Activated CD8-positive, alpha-beta T cell treated with anti-CD3 and anti-CD28 coated beads, Interleukin-2, amount 10 ng/mL, durations not matched to agents 7 days and 5 days (primary cell): ENCODE measurements at regions of chr1 and their contacts with region 1.

Region 1: DNA sequence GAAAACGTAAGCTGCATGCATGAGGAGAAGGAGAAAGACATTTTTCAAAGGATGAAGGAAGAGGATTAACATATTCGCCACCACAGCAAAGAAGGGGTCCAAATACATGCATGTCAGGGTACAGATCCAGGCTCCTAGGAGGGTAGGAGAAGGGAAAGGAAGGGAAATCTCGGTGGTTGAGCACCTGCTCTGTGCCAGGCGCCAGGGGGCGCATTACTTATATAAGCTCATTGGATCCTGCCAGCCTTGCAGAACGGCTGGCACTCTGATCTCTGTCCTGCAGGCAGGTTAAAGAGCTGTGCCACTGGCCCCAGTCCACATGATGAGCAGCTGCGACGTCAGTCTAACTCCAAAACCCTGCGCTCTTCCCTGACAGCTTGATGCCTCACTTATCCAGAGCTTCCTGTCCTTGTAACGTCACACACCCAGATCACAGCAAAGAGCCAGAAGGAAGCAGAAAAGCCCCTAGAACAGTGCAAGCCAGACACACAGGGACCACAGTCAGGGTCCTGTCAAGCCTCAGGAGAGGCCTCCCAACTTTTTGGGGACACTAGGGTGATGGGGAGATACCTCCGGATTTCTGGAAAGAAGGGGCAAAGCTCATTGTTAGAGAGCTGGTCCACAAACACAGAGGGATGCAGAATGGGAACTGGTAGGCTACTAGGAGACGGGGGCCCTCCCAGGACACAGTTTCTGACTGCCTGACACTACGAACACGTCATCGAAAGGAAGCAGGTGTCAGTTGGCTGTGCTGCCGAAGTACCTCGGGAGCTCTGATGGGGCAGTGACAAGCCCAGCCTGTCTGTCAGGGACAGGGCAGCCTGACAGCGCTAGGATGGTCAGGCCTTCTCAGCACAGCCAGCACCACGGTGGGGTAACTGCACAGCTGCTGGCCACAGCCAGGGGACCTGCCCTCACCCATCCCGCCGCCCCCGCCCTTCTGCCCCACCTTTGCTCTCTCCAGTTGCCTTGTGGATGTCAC is 99.1 kb downstream of the BEND5 start:
- DNase-seq: peak; percentile 32
- ATAC-seq: peak; percentile 57
- H3K4me3 Mint-ChIP-seq: no peak overlapping the region
- H3K27ac Mint-ChIP-seq: no peak overlapping the region
- H3K4me1 Mint-ChIP-seq: no peaks in the 10 kb centered on the region
- H3K27me3 Mint-ChIP-seq: peaks cover 6% of the 10 kb centered on the region

Region 2: DNA sequence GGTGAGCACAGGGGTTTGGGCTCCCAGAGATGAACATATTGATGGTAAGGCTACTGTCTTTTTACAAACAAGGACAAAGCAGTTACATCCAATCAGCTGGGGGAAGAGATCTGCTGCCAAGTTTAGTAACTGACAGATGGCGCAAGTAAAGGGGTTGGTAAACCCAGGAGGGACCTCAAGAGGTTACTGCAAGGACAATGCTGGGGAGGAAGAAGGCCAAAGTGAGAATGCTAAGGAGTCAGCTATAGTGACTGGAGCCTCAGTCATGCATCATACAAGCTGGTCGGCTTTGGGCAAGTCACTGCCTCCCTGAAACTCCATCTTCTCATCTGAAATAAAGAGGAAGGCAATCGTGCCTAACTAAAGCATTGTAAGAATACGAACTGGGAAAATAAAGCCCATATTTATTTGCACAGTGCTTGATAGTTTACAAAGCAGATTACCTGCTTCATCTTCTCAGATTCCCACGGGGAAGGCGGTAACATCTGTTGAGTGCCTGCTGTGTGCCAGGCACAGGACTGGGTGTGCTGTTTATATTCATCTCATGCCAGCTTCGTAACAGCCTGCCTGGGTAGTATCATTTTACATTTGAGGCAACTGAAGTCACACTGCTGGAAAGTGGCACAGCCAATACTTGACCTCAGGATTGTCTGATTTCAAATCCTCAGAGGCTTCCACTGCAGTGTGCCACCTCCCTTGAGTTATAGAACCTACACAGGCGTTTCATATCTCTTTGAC is 15.7 kb before region 1 on chr1:
- CTCF ChIA-PET with region 1: interaction called, 10 read pairs
- POLR2A ChIA-PET with region 1: no interaction called
- DNase-seq: no peak
- ATAC-seq: no peak
- H3K4me3 Mint-ChIP-seq: no peak overlapping the region
- H3K27ac Mint-ChIP-seq: no peak overlapping the region
- H3K4me1 Mint-ChIP-seq: peaks cover 6% of the 10 kb centered on the region
- H3K27me3 Mint-ChIP-seq: peaks cover 10% of the 10 kb centered on the region

Region 3: GRCh38 chr1:48697066-48697707 is 19.6 kb after region 1 on chr1:
- CTCF ChIA-PET with region 1: interaction called, 24 read pairs
- POLR2A ChIA-PET with region 1: no interaction called
- DNase-seq: peak; percentile 70
- ATAC-seq: no peak
- H3K4me3 Mint-ChIP-seq: no peak overlapping the region
- H3K27ac Mint-ChIP-seq: no peak overlapping the region
- H3K4me1 Mint-ChIP-seq: no peaks in the 10 kb centered on the region
- H3K27me3 Mint-ChIP-seq: peaks cover 4% of the 10 kb centered on the region

Region 4: GRCh38 chr1:48817505-48818114 is 140.0 kb after region 1 on chr1:
- CTCF ChIA-PET with region 1: interaction called, 53 read pairs
- POLR2A ChIA-PET with region 1: no interaction called
- DNase-seq: peak; percentile 23
- ATAC-seq: no peak
- H3K4me3 Mint-ChIP-seq: no peak overlapping the region
- H3K27ac Mint-ChIP-seq: no peak overlapping the region
- H3K4me1 Mint-ChIP-seq: no peaks in the 10 kb centered on the region
- H3K27me3 Mint-ChIP-seq: peaks cover 7% of the 10 kb centered on the region

Region 5: GRCh38 chr1:48830720-48831119 is 153.1 kb after region 1 on chr1:
- CTCF ChIA-PET with region 1: no interaction called
- POLR2A ChIA-PET with region 1: no interaction called
- DNase-seq: no peak
- ATAC-seq: no peak
- H3K4me3 Mint-ChIP-seq: no peak overlapping the region
- H3K27ac Mint-ChIP-seq: no peak overlapping the region
- H3K4me1 Mint-ChIP-seq: no peaks in the 10 kb centered on the region
- H3K27me3 Mint-ChIP-seq: peaks cover 10% of the 10 kb centered on the region